OCI-LY7 (cell line): ENCODE measurements at regions of chr1 and their contacts with region 1.

Region 1: DNA sequence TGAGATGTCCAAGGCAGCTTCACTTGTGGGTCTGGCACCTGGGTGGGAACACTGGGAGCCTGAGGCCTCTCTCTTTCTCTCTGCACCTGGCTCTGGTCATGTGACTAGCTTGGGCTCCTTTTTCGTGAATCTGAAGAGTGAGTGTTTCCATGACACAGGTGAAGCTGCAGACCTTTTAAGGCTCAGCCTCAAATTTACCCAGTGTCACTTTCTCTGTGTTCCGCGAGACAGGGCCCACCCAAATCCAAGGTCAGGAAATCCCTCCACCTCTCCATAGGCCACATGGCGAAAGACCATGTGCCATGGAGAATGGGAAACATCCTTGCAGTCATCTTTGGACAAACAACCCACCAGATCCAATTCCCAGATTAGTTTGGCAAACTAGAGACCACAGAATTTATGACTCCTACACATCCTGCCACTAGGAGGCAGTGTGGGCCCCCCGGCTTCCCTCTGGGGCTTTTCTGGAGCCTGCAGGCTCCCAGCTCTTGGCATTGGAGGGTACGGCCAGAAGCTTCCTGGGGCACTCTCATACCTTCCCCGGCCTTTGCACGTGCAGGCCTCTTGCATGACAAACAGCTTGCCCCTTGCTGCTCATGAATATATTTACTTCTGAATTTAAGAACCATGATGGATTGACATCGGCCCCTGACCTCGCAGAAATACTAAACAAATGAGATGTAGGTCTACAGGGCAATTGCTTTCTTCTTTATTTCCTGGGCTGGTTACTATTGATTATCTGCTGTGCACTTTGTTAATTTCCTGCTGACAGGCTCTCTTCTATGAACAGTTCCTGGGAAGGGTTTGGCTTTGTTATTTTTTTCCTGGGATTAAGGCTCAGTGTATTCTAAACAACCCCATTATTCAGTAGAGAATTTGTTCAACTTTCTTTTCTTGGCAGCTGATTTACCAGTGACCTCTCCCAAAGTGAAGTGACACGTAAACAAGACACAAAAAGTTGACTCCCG is 180.7 kb downstream of the KAZN start:
- DNase-seq: peak; percentile 64
- H3K4me3 ChIP-seq: no peak overlapping the region
- H3K27ac ChIP-seq: no peak overlapping the region
- H3K4me1 ChIP-seq: peaks cover 16% of the 10 kb centered on the region
- CTCF ChIP-seq: peak; percentile 95

Region 2: DNA sequence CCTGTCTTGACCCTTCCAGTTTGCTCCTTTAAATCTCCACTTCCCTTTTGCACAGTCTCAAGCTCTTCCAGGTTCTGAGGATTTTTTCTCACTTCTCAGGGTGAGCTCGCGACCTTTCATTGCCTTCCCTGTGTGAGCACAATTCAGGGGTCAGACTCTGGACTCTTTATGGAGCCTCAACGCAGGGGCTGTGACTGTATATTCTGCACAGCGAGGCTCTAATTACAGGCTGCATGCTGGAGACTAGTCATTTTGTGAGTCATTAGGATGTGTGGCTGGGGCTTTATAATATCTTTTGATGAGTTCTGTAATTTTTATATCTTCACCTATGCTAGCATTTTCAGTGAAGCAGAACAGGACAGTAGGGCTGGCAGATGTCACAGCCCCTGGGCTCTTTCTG is 90.0 kb after region 1 on chr1:
- CTCF ChIA-PET with region 1: no interaction called
- POLR2A ChIA-PET with region 1: no interaction called
- intact Hi-C with region 1: no loop called
- DNase-seq: no peak
- H3K4me3 ChIP-seq: no peak overlapping the region
- H3K27ac ChIP-seq: no peak overlapping the region
- H3K4me1 ChIP-seq: no peaks in the 10 kb centered on the region
- CTCF ChIP-seq: no peak

Region 3: GRCh38 chr1:15038232-15039016 is 259.2 kb after region 1 on chr1:
- CTCF ChIA-PET with region 1: no interaction called
- POLR2A ChIA-PET with region 1: no interaction called
- intact Hi-C with region 1: loop called (anchors 10 kb)
- DNase-seq: peak; percentile 73
- H3K4me3 ChIP-seq: no peak overlapping the region
- H3K27ac ChIP-seq: no peak overlapping the region
- H3K4me1 ChIP-seq: peaks cover 11% of the 10 kb centered on the region
- CTCF ChIP-seq: peak; percentile 79